Naive thymus-derived CD4-positive, alpha-beta T cell (primary cell): ENCODE measurements at regions of chr3 and their contacts with region 1.

Region 1: DNA sequence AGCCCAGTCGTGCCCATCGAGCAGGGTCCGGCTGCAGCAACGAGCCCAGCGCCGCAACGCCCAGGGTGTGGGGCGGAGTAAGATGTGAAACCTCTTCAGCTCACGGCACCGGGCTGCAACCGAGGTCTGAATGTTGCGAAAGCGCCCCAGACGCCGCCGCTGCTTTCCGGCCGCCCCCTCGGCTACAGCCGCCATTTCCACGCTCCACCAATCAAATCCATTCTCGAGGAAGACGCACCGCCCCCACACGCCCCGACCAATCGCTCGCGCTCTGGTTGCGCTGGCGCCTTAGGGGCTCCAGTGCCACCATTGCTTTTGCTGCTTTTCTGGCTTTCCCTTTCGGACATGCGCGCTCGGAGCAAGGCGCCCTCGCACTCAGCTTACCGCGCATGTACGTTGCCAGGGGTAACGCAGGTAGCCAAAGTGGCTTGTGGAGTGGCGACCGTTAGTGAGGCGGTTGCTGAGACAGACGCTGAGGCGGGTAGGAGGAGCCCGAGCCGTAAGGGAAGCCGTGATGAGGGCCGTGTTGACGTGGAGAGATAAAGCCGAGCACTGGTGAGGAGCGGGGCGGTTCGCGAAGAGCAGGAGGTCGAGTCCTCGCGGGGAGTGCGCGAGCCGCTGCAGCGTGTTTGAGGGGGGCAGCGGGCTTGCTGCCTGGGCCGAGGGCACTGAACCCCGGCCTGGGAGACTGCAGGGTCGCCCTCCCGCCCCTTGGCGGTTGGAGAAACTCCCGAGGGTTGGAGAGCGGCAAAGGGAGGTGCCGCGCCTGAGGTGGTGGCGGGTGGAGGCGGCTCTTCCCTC is at the starts of genes IFT122 and MBD4:
- DNase-seq: peak; percentile 95 to 100 (median 99)
- ATAC-seq: peak; percentile 91
- H3K4me3 ChIP-seq: peak within 1 kb of the TSS; percentile 99
- H3K4me3 Mint-ChIP-seq: peak within 1 kb of the TSS; percentile 85 to 98 (median 94)
- H3K27ac ChIP-seq: peak within 1 kb of the TSS; percentile 95
- H3K27ac Mint-ChIP-seq: peak within 1 kb of the TSS; percentile 93 to 99 (median 97)
- H3K4me1 ChIP-seq: peaks cover 19 to 38% of the 10 kb centered on the region in 2 donors
- H3K4me1 Mint-ChIP-seq: peaks cover 52 to 88% (median 73%) of the 10 kb centered on the region in 7 donors
- H3K27me3 ChIP-seq: no peaks in the 10 kb centered on the region
- H3K27me3 Mint-ChIP-seq: no peaks in the 10 kb centered on the region
- total RNA-seq, gene IFT122: 16.6 to 25.2 (median 18.8) TPM
- total RNA-seq, gene MBD4: 37.9 to 56.6 (median 53.1) TPM

Region 2: DNA sequence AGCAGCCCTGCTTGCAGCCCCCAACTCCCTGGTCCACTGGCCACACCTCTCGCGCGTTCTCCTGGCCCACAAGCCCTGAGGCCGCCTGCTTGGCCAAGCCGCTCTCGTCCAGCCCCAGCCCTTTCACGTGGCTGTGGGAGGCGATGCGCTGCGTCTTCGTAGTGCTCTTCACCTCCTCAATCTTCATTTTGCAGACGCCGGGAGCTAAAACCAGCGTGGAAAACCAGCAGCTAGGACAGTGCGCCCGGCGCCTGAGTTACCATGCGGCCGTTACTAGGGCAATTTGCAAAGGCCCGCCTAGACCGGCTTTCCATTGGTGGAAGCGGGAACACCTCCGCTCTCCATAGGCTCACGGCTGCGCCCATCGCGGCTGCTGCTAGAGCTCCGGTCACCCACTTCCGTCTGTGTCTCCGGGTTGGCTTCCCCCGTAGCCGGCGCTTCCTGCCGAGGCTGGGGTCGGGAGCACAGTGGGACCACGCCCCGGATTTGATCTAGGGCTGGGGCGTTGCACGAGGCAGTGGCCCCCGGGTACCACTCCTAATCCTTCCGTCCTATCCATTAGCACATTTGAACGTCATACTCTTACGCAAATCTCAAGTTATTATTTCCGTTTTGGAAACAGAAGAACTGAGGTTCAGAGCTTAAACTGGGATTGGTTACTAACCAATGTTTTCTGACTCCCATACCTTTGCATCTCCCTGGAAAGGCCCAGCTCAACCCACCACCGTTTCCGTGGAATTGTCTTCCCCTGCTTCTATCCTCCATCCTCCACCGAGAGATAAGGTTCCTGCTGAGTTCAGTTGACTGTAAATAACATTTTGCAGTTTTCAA is 1316.3 kb before region 1 on chr3 and contains the start of gene RUVBL1:
- CTCF ChIA-PET with region 1: no interaction called
- POLR2A ChIA-PET with region 1: no interaction called
- intact Hi-C with region 1: loop called in 1 of 2 experiments (anchors 5 kb)
- DNase-seq: peak; percentile 85 to 99 (median 98)
- ATAC-seq: peak; percentile 97
- H3K4me3 ChIP-seq: peak within 1 kb of the TSS; percentile 83
- H3K4me3 Mint-ChIP-seq: peak within 1 kb of the TSS; percentile 82 to 100 (median 98)
- H3K27ac ChIP-seq: peak within 1 kb of the TSS; percentile 84
- H3K27ac Mint-ChIP-seq: peak within 1 kb of the TSS; percentile 95 to 99 (median 97)
- H3K4me1 ChIP-seq: peaks cover 13 to 15% of the 10 kb centered on the region in 2 donors
- H3K4me1 Mint-ChIP-seq: peaks cover 23 to 40% (median 27%) of the 10 kb centered on the region in 7 donors
- H3K27me3 ChIP-seq: no peaks in the 10 kb centered on the region
- H3K27me3 Mint-ChIP-seq: peaks cover 0 to under 1% (median 0%) of the 10 kb centered on the region in 5 donors
- total RNA-seq, gene RUVBL1: 16.8 to 59.3 (median 22.5) TPM

Region 3: DNA sequence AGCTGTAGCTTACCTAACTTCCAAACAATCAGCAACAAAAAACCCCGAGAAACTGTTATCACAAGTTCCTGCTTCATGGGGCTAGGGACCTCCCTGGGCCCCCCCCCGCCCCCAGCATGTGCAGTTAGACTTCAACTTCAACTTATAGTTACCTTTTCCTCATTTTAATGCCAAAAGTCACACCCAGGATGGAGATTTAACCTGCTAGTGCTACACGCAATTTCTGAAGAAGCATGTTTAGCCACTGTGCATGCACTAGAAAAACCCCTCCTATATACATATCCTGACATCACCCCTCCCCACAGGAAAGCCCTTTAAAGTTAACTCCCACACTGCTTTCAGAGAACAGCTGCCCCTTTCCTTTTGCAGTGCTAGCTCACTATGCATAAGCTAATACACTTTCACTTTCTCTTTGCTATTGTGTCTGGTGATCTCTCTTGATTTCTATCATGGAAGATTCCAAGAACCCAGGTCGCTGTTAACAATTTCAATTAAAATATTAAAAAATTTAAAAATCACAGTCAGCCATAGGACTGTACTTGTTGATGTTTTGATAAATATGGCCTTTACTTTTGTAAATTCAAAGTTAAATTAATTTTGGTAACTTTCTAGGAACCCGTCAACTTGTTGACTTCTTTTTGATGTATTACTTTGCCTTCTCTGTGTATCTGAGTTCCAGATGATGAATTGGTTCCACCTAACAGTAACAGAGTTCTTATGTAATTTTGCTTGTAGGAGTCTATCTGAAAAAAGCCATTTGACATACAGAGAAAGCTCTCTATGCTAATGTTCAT is 635.8 kb before region 1 on chr3:
- CTCF ChIA-PET with region 1: no interaction called
- POLR2A ChIA-PET with region 1: no interaction called
- intact Hi-C with region 1: loop called in 1 of 2 experiments (anchors 5 kb)
- DNase-seq: peak in 8 of 9 donors; percentile 54 to 88 (median 84)
- ATAC-seq: peak; percentile 92
- H3K4me3 ChIP-seq: peak overlapping the region; percentile 49
- H3K4me3 Mint-ChIP-seq: peak overlapping the region; percentile 48 to 89 (median 80)
- H3K27ac ChIP-seq: peak overlapping the region; percentile 74
- H3K27ac Mint-ChIP-seq: peak overlapping the region; percentile 91 to 98 (median 96)
- H3K4me1 ChIP-seq: peaks cover 22 to 64% of the 10 kb centered on the region in 2 donors
- H3K4me1 Mint-ChIP-seq: peaks cover 59 to 91% (median 85%) of the 10 kb centered on the region in 7 donors
- H3K27me3 ChIP-seq: no peaks in the 10 kb centered on the region
- H3K27me3 Mint-ChIP-seq: no peaks in the 10 kb centered on the region

Region 4: DNA sequence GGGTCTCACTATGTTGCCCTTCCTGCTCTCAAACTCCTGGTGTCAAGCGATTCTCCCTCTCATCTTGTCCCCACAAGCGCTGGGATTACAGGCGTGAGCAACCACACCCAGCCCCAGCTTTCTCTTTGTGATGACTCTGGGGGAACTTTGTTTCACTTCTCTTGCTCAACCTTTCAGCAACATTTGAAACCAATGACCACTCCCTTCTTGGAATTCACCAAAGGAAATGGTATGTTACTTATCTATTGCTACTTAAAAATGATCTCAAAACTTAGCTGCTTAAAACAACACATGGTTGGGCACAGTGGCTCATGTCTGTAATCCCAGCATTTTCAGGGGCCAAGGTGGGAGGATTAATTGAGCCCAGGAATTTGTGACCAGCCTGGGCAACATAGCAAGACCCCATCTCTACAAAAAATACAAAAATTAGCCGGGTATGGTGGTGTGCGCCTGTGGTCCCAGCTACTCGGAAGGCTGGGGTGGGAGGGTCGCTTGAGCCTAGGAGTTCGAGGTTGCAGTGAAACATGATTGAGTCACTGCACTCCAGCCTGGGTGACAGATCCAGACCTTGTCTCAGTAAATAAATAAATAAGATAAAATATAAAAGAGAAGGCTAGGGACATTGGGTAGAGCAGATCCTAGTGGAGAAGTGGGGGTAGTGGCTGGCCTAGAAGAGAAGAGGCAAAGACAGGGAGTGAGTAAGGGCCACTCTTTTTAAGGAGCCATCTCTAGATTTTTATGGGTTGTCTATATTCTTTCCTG is 200.9 kb before region 1 on chr3:
- CTCF ChIA-PET with region 1: no interaction called
- POLR2A ChIA-PET with region 1: no interaction called
- intact Hi-C with region 1: no loop called
- DNase-seq: peak in 1 of 9 donors; percentile 49
- ATAC-seq: peak; percentile 82
- H3K4me3 ChIP-seq: peak overlapping the region; percentile 16
- H3K4me3 Mint-ChIP-seq: peak overlapping the region in 4 of 10 donors; percentile 44 to 84 (median 52)
- H3K27ac ChIP-seq: no peak overlapping the region
- H3K27ac Mint-ChIP-seq: peak overlapping the region in 4 of 9 donors; percentile 36 to 97 (median 60)
- H3K4me1 ChIP-seq: peaks cover 0 to 3% of the 10 kb centered on the region in 2 donors
- H3K4me1 Mint-ChIP-seq: peaks cover 6 to 61% (median 13%) of the 10 kb centered on the region in 7 donors
- H3K27me3 ChIP-seq: no peaks in the 10 kb centered on the region
- H3K27me3 Mint-ChIP-seq: no peaks in the 10 kb centered on the region

Region 5: DNA sequence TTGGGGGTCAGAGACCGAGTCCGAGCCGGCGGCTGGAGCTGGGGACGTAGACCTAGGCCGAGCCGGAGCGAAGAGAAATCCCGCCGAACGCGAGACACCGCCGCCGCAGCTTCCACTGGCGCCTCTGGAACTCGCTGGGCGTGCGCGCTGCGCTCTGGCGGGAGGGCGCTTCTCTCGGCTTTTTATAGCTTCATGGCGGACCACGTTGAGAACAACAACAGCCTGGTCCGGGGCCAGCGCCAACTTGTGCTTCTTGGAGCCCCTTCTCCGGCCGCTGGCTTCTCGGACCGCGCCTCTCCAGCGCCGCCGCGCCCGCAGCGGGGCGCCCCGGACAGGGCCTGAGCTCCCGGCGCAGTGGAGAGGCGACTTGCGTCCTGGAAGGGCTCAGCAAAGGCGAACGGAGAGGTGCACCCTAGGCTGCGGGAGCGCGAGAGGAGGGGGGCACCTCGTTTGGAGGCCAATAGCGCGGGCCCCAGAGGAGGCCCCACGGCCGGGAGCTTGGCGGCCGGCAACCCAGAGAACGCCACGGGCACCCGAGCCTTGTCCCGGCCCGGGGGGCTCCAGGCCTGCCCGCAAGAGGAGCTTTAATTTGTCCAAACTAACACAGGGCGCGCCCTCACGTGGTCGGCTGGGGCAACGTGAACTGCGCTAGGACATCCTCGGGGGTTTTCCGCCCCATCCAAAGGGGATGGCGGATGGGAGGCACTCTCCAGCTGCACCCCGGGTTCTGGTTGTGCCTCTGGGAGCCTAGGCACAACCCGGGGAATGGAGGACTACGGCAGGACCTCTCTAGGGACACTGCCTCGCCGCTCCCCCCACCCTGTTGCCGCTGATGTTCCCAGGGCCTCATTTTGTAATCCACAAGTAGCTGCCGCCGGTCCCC is 123.6 kb before region 1 on chr3:
- CTCF ChIA-PET with region 1: no interaction called
- POLR2A ChIA-PET with region 1: interaction called, 37 read pairs
- intact Hi-C with region 1: loop called (anchors 1 kb)
- DNase-seq: peak; percentile 80 to 96 (median 88)
- ATAC-seq: peak; percentile 75
- H3K4me3 ChIP-seq: peak overlapping the region; percentile 89
- H3K4me3 Mint-ChIP-seq: peak overlapping the region; percentile 70 to 97 (median 88)
- H3K27ac ChIP-seq: peak overlapping the region; percentile 88
- H3K27ac Mint-ChIP-seq: peak overlapping the region; percentile 80 to 94 (median 88)
- H3K4me1 ChIP-seq: peaks cover 5 to 10% of the 10 kb centered on the region in 2 donors
- H3K4me1 Mint-ChIP-seq: peaks cover 17 to 31% (median 24%) of the 10 kb centered on the region in 7 donors
- H3K27me3 ChIP-seq: no peaks in the 10 kb centered on the region
- H3K27me3 Mint-ChIP-seq: peaks cover 0 to 2% (median 0%) of the 10 kb centered on the region in 5 donors

Region 6: DNA sequence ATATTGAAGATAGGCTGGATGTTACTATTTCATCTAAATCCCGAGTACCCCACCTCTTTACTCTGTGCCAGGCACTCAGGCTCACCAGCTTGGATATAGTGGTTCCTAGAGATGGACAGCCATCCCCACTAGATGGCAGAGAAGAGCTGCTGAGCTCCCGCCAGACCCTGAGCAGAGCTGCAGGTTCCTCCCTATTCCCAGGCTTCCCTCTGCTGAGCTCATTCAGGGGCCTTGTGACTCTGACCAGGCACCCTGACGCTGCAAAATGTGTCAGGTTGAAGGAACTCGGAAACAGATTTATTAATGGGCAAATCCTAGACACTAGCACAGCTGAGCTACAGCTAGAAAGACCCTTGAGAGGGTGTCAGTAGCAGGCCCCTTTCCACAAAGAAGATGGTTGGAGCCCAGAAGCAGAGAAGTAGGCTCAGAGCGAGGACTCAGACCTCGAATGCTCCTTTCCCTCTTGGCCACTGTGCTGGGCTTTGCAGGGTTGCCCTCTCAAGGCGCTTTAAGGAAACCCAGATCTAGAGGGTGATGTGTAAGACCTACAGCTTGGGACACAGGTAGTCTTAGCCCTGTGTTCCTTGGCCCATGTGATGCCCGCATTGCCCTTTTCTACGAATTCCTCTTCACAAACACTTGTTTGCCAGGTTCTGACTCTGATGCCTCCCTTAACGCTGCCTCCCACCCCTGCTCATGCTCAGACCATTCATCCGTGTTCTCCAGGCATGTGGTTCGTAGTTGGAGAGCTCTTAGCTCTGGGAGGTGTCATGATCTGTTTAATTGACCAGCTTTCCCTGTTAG is 50.4 kb after region 1 on chr3:
- CTCF ChIA-PET with region 1: no interaction called
- POLR2A ChIA-PET with region 1: interaction called, 4 read pairs
- intact Hi-C with region 1: loop called in 1 of 2 experiments (anchors 2 kb)
- DNase-seq: peak in 8 of 9 donors; percentile 16 to 56 (median 40)
- ATAC-seq: peak; percentile 91
- H3K4me3 ChIP-seq: no peak overlapping the region
- H3K4me3 Mint-ChIP-seq: no peak overlapping the region
- H3K27ac ChIP-seq: no peak overlapping the region
- H3K27ac Mint-ChIP-seq: no peak overlapping the region
- H3K4me1 ChIP-seq: no peaks in the 10 kb centered on the region
- H3K4me1 Mint-ChIP-seq: peaks cover 0 to 3% (median 0%) of the 10 kb centered on the region in 7 donors
- H3K27me3 ChIP-seq: no peaks in the 10 kb centered on the region
- H3K27me3 Mint-ChIP-seq: no peaks in the 10 kb centered on the region

Region 7: GRCh38 chr3:130111185-130111864 is 671.3 kb after region 1 on chr3:
- CTCF ChIA-PET with region 1: no interaction called
- POLR2A ChIA-PET with region 1: no interaction called
- intact Hi-C with region 1: loop called in 1 of 2 experiments (anchors 1 kb)
- DNase-seq: peak; percentile 96 to 99 (median 98)
- ATAC-seq: peak; percentile 100
- H3K4me3 ChIP-seq: peak overlapping the region; percentile 58
- H3K4me3 Mint-ChIP-seq: peak overlapping the region; percentile 85 to 100 (median 98)
- H3K27ac ChIP-seq: peak overlapping the region; percentile 90
- H3K27ac Mint-ChIP-seq: peak overlapping the region; percentile 91 to 100 (median 100)
- H3K4me1 ChIP-seq: no peaks in the 10 kb centered on the region
- H3K4me1 Mint-ChIP-seq: peaks cover 11 to 22% (median 13%) of the 10 kb centered on the region in 7 donors
- H3K27me3 ChIP-seq: no peaks in the 10 kb centered on the region
- H3K27me3 Mint-ChIP-seq: peaks cover 0 to 14% (median 0%) of the 10 kb centered on the region in 5 donors